ENCODE measurements at regions of chr11 and their contacts with region 1.

Region 1: GRCh38 chr11:46242916-46243795 is 34.3 kb upstream of the CREB3L1 start:
- DNase-seq: peak; percentile 92 to 98 (median 95)
- H3K4me3 ChIP-seq: peak overlapping the region; percentile 67 to 76 (median 70)
- H3K27ac ChIP-seq: peak overlapping the region; percentile 59 to 65
- H3K4me1 ChIP-seq: peaks cover 3 to 11% (median 7%) of the 10 kb centered on the region in 3 donors
- H3K27me3 ChIP-seq: peaks cover 3% of the 10 kb centered on the region
- CTCF ChIP-seq: no peak

Region 2: DNA sequence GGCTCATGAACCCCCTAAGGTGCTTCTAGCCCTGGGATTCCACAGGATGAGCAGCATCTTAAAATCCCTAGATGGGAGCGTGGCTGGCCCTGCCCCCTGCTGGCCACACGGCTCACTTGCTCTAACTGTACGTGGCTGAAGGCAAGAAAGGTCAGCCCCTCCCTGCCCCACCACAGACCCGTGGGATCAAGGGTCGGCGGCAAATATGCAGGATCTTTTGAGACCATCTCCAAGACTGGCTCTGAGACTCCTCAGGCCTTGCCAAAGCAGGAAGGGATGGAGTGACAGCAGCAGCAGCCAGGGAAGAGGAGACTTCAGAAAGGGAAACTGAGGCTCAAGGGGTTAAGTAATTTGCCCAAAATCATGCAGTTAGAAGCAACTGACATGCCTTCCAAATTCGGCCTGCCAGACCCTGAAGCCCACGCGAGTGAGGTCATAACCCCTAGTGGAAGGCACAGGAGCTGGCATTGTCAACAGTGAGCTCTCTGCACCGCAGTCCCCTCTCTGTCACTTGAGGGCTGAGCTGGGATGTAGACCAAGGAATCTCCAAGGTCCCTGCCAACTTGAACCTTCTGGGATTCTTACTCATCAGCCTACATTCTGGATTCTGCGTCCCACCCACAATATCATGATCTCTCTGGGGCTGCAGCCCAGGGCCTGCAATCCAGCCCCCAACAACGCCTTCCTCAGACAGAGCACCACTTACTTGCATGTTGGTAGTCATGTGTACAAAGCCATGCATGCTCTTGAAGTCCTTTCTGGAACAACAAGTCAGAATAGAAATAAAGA is 65.7 kb after region 1 on chr11:
- intact Hi-C with region 1: loop called (anchors 5 kb)
- DNase-seq: peak; percentile 62 to 85 (median 81)
- H3K4me3 ChIP-seq: no peak overlapping the region
- H3K27ac ChIP-seq: no peak overlapping the region
- H3K4me1 ChIP-seq: peaks cover 0 to 3% (median 0%) of the 10 kb centered on the region in 3 donors
- H3K27me3 ChIP-seq: no peaks in the 10 kb centered on the region
- CTCF ChIP-seq: peak; percentile 94